Activated CD4-positive, alpha-beta T cell treated with anti-CD3 and anti-CD28 coated beads for 36 hours (primary cell): ENCODE measurements at regions of chr17 and their contacts with region 1.

Region 1: DNA sequence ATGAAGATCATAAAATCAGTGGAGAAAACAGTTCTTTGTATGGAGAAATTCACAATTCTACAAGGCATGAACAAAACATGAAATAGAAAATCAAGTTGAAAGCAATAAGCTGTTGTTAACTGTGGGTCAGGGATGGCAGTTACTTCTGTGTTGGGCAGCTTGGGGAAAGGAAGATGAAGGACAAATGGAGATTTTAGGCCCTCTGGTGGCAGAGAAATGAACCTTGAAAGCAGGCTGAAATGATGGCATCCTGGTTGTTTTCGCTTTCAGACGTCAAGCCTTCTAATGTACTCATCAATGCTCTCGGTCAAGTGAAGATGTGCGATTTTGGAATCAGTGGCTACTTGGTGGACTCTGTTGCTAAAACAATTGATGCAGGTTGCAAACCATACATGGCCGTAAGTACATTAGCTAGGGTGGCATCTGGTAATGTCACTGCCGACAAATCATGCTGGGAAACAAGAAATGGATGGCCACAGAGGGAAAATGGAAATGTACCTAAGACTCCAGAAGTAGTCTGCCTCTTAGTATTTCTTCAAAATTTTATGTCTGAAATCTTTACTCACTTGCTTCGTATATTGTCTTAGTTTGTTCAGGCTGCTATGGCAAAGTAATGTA is 108.9 kb downstream of the MAP2K6 start:
- DNase-seq: peak; percentile 13
- ATAC-seq: no peak
- H3K4me3 Mint-ChIP-seq: no peak overlapping the region
- H3K27ac Mint-ChIP-seq: no peak overlapping the region
- H3K4me1 Mint-ChIP-seq: no peaks in the 10 kb centered on the region
- H3K27me3 Mint-ChIP-seq: no peaks in the 10 kb centered on the region

Region 2: GRCh38 chr17:69335058-69335457 is 188.3 kb before region 1 on chr17:
- CTCF ChIA-PET with region 1: interaction called, 4 read pairs
- POLR2A ChIA-PET with region 1: interaction called, 4 read pairs
- intact Hi-C with region 1: loop called (anchors 1 to 2 kb)
- DNase-seq: no peak
- ATAC-seq: peak; percentile 47
- H3K4me3 Mint-ChIP-seq: peak overlapping the region; percentile 21
- H3K27ac Mint-ChIP-seq: no peak overlapping the region
- H3K4me1 Mint-ChIP-seq: peaks cover 10% of the 10 kb centered on the region
- H3K27me3 Mint-ChIP-seq: peaks cover 8% of the 10 kb centered on the region

Region 3: GRCh38 chr17:69388822-69389442 is 134.4 kb before region 1 on chr17:
- CTCF ChIA-PET with region 1: no interaction called
- POLR2A ChIA-PET with region 1: no interaction called
- intact Hi-C with region 1: loop called in 1 of 2 experiments (anchors 2 kb)
- DNase-seq: no peak
- ATAC-seq: no peak
- H3K4me3 Mint-ChIP-seq: no peak overlapping the region
- H3K27ac Mint-ChIP-seq: no peak overlapping the region
- H3K4me1 Mint-ChIP-seq: no peaks in the 10 kb centered on the region
- H3K27me3 Mint-ChIP-seq: peaks cover 4% of the 10 kb centered on the region

Region 4: DNA sequence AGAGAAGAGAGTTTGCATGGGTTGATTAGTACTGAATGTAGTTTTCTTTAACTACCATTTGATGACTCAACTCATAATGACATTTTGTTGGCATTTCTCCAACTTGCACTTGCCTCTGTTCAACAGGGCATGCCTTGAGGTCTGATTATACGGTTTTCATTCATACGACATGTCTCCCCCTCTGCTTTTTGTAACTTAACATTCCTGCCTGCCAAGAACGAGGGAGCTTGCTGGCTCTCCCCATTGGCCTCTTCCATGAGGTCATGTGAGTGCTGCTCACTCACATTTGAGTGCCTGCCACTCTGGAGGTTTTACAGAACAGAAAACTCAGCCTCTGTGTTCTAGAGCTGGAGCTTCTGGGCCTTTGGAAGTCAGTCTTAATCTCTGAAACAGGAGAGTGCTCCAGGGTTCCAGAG is 89.2 kb before region 1 on chr17:
- CTCF ChIA-PET with region 1: no interaction called
- POLR2A ChIA-PET with region 1: no interaction called
- intact Hi-C with region 1: no loop called
- DNase-seq: no peak
- ATAC-seq: no peak
- H3K4me3 Mint-ChIP-seq: no peak overlapping the region
- H3K27ac Mint-ChIP-seq: no peak overlapping the region
- H3K4me1 Mint-ChIP-seq: peaks cover 22% of the 10 kb centered on the region
- H3K27me3 Mint-ChIP-seq: no peaks in the 10 kb centered on the region

Region 5: GRCh38 chr17:69511250-69511649 is 12.1 kb before region 1 on chr17:
- CTCF ChIA-PET with region 1: interaction called, 30 read pairs
- POLR2A ChIA-PET with region 1: no interaction called
- intact Hi-C with region 1: no loop called
- DNase-seq: no peak
- ATAC-seq: no peak
- H3K4me3 Mint-ChIP-seq: no peak overlapping the region
- H3K27ac Mint-ChIP-seq: no peak overlapping the region
- H3K4me1 Mint-ChIP-seq: peaks cover 5% of the 10 kb centered on the region
- H3K27me3 Mint-ChIP-seq: no peaks in the 10 kb centered on the region

Region 6: DNA sequence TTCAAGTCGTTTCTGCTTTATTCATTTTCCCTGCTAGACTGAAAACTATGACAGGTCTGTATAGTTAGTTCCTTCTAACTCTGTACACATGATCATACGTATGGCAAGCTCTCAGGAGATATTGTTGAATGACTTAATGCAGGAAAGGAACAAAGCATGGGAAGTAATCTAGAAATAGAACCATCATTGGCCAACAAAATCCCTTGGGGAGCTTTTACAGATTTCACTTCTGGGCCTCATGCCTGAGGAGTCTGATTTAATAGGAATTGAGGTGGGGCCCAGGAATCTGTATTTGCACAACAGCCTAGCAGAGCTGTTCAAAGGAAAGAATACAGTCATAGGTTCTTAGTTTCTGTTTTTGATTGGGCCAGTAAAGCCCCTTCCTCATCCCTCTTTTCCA is 120.3 kb after region 1 on chr17:
- CTCF ChIA-PET with region 1: no interaction called
- POLR2A ChIA-PET with region 1: no interaction called
- intact Hi-C with region 1: no loop called
- DNase-seq: no peak
- ATAC-seq: no peak
- H3K4me3 Mint-ChIP-seq: no peak overlapping the region
- H3K27ac Mint-ChIP-seq: no peak overlapping the region
- H3K4me1 Mint-ChIP-seq: no peaks in the 10 kb centered on the region
- H3K27me3 Mint-ChIP-seq: peaks cover 2% of the 10 kb centered on the region

Region 7: GRCh38 chr17:70552230-70552981 is 1029.1 kb after region 1 on chr17:
- CTCF ChIA-PET with region 1: interaction called, 5 read pairs
- POLR2A ChIA-PET with region 1: no interaction called
- intact Hi-C with region 1: loop called in 1 of 2 experiments (anchors 5 kb)
- DNase-seq: no peak
- ATAC-seq: no peak
- H3K4me3 Mint-ChIP-seq: no peak overlapping the region
- H3K27ac Mint-ChIP-seq: no peak overlapping the region
- H3K4me1 Mint-ChIP-seq: no peaks in the 10 kb centered on the region
- H3K27me3 Mint-ChIP-seq: no peaks in the 10 kb centered on the region